Activated CD4-positive, alpha-beta T cell treated with anti-CD3 and anti-CD28 coated beads for 36 hours (primary cell): ENCODE measurements at regions of chr3 and their contacts with region 1.

Region 1: GRCh38 chr3:69761896-69762767 is 22.9 kb downstream of the MITF start:
- DNase-seq: no peak
- ATAC-seq: no peak
- H3K4me3 Mint-ChIP-seq: no peak overlapping the region
- H3K27ac Mint-ChIP-seq: no peak overlapping the region
- H3K4me1 Mint-ChIP-seq: no peaks in the 10 kb centered on the region
- H3K27me3 Mint-ChIP-seq: peaks cover 2% of the 10 kb centered on the region

Region 2: DNA sequence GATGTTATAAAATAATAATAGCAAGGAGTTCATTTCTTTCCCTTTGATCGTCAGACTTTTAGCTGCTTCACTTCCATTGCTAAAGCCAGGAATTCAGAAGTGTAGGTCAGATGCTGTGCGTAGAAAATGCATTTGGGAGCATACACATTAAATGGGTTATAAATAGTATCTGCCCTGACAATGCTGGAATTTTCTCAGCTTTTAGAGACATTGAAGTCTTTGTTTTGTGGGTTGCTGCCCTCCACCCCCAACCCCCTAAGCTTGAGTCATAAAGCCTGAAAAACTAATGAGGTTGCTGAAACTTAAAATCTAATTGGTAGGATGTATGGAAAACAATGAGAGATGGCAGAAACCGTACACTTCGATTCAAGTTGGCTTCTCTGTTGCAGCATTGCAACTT is 59.0 kb after region 1 on chr3:
- CTCF ChIA-PET with region 1: interaction called, 3 read pairs
- POLR2A ChIA-PET with region 1: no interaction called
- intact Hi-C with region 1: loop called in 1 of 2 experiments (anchors 10 kb)
- DNase-seq: no peak
- ATAC-seq: no peak
- H3K4me3 Mint-ChIP-seq: no peak overlapping the region
- H3K27ac Mint-ChIP-seq: no peak overlapping the region
- H3K4me1 Mint-ChIP-seq: no peaks in the 10 kb centered on the region
- H3K27me3 Mint-ChIP-seq: peaks cover 4% of the 10 kb centered on the region